HAP-1 (cell line): ENCODE measurements at regions of chr4 and their contacts with region 1.

Region 1: DNA sequence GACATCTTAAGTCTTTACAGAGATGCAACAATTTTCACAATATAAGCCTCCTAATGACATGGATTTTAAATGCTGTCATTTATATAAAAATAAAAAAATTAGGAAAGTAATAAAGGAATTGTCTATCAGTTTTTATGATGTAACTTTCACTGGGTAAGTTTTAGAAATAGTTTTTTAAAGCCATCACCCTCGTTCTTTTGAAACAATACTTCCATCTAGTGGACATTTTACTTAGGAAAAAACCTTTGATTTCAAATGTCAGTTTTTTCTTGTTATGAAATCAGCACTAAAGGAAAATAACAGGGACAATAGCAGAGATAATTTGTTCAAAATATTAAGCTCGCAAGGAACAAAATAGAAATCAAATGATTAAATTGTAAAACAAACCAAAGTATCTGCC is 24.3 kb upstream of the NDNF start:
- DNase-seq: no peak
- H3K4me3 ChIP-seq: no peak overlapping the region
- H3K4me1 ChIP-seq: no peaks in the 10 kb centered on the region
- H3K27me3 ChIP-seq: 0 out of 2 replicates have a peak, but pooled peaks cover 4% of the 10 kb centered on the region

Region 2: GRCh38 chr4:120071192-120071795 is 1025.3 kb before region 1 on chr4:
- in situ Hi-C with region 1: loop called (anchors 10 kb)
- DNase-seq: peak; percentile 59 to 65
- H3K4me3 ChIP-seq: no peak overlapping the region
- H3K4me1 ChIP-seq: peaks cover 24% of the 10 kb centered on the region
- H3K27me3 ChIP-seq: no peaks in the 10 kb centered on the region

Region 3: GRCh38 chr4:120156120-120156718 is 940.4 kb before region 1 on chr4:
- in situ Hi-C with region 1: loop called (anchors 25 kb)
- DNase-seq: peak; percentile 55 to 59
- H3K4me3 ChIP-seq: no peak overlapping the region
- H3K4me1 ChIP-seq: peaks cover 11% of the 10 kb centered on the region
- H3K27me3 ChIP-seq: no peaks in the 10 kb centered on the region